ENCODE measurements at regions of chr20 and their contacts with region 1.

Region 1: DNA sequence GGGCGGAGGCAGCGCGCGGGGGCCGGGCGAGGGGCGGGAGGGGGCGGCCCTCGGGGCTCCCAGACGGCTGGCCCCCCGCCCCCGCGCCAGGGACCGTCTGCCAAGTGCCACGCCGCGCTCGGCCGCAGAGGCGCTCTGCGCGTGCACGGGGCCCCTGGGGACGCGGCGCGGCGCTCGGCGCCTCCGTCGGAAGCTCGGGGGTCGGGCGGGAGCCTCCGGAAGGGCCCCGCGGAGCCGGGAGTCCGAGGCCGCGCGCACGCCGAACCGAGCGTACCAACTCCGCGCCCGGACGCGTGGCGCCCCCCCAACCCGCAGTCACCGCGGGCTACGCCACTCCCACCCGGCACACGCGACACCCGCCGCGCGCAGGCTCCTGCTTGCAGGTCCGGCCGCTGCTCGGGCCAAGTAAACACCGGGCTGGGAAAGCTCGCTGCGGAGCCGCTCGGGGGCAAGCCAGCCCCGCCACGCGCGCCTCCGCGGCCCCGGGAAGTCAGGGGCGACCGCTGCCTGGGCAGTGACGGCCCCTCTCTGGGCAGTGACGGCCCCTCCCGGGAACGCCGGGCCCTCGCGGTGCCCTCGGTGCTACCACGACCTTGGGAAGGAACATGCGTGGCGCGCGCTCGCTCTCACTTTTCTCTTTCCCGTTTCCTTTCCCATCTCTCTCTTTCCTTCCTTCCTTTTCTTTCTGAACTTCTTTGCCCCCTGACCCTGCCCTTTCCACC is 384 bp upstream of the PREX1 start:
- H3K4me3 Mint-ChIP-seq: peak overlapping the region; percentile 80
- H3K27ac Mint-ChIP-seq: peak overlapping the region; percentile 87
- H3K4me1 Mint-ChIP-seq: peaks cover 49% of the 10 kb centered on the region
- H3K27me3 Mint-ChIP-seq: no peaks in the 10 kb centered on the region

Region 2: GRCh38 chr20:48722737-48723191 is 105.4 kb before region 1 on chr20:
- intact Hi-C with region 1: loop called (anchors 5 kb)
- H3K4me3 Mint-ChIP-seq: peak overlapping the region; percentile 35
- H3K27ac Mint-ChIP-seq: peak overlapping the region; percentile 80
- H3K4me1 Mint-ChIP-seq: peaks cover 98% of the 10 kb centered on the region
- H3K27me3 Mint-ChIP-seq: no peaks in the 10 kb centered on the region

Region 3: DNA sequence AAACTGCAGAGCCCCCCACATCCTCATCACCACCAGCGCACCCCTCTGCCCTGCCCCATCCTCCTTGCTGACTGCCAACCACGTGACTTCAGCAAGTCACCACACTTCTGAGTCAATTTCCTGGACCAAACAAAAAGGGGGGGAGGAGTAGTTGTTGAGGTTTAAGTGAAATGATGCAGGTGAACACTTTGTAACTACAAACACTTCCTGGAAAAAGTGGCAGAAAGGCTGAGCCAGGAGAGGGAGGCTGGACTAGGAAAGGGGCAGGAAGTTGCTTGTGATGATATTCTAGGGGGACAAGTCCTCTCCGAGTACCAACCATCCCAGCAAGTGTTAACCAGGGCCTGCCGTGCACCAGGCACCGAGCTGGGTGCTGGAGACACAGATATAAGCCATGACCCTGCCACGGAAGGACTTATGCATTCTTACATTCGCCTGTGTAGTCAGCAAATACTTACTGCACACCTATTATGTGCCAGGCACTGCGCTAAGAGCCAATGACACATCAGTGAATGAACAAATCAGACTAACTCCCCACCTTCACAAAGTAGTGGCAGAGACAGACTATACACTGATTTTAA is 67.7 kb before region 1 on chr20:
- intact Hi-C with region 1: no loop called
- H3K4me3 Mint-ChIP-seq: no peak overlapping the region
- H3K27ac Mint-ChIP-seq: peak overlapping the region; percentile 31
- H3K4me1 Mint-ChIP-seq: peaks cover 97% of the 10 kb centered on the region
- H3K27me3 Mint-ChIP-seq: no peaks in the 10 kb centered on the region

Region 4: DNA sequence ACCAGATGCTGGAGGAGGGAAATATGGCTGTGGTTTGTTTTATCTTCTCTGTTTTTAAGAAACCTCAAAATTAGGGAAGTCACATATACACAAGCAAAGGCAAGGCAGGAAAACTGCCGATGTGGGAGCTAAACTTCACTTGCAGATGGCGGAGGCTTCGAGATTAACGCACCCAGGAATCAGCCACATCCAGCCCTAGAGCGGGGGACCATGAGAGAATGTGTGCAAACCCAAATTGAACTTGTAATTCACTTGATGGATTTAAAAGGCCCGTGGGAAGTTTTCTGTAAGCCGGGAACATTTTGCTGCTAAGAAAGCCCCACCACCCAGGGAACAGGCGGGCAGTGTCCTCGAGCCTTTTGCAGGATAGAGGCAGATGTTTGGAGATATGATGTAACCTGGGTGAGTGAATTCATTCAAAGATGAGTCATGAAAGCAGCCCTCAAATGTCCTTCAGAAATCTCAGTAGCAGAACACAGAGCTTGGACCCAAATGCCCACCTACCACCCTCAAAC is 40.3 kb before region 1 on chr20:
- intact Hi-C with region 1: loop called (anchors 5 kb)
- H3K4me3 Mint-ChIP-seq: peak overlapping the region; percentile 57
- H3K27ac Mint-ChIP-seq: peak overlapping the region; percentile 83
- H3K4me1 Mint-ChIP-seq: peaks cover 82% of the 10 kb centered on the region
- H3K27me3 Mint-ChIP-seq: no peaks in the 10 kb centered on the region

Region 5: GRCh38 chr20:48904365-48905296 is 76.4 kb after region 1 on chr20:
- intact Hi-C with region 1: loop called (anchors 5 kb)
- H3K4me3 Mint-ChIP-seq: no peak overlapping the region
- H3K27ac Mint-ChIP-seq: peak overlapping the region; percentile 20
- H3K4me1 Mint-ChIP-seq: peaks cover 60% of the 10 kb centered on the region
- H3K27me3 Mint-ChIP-seq: no peaks in the 10 kb centered on the region